Activated B cell treated with CpG ODN at 0.5 μM for 24 hours (primary cell): ENCODE measurements at regions of chr15 and their contacts with region 1.

Region 1: DNA sequence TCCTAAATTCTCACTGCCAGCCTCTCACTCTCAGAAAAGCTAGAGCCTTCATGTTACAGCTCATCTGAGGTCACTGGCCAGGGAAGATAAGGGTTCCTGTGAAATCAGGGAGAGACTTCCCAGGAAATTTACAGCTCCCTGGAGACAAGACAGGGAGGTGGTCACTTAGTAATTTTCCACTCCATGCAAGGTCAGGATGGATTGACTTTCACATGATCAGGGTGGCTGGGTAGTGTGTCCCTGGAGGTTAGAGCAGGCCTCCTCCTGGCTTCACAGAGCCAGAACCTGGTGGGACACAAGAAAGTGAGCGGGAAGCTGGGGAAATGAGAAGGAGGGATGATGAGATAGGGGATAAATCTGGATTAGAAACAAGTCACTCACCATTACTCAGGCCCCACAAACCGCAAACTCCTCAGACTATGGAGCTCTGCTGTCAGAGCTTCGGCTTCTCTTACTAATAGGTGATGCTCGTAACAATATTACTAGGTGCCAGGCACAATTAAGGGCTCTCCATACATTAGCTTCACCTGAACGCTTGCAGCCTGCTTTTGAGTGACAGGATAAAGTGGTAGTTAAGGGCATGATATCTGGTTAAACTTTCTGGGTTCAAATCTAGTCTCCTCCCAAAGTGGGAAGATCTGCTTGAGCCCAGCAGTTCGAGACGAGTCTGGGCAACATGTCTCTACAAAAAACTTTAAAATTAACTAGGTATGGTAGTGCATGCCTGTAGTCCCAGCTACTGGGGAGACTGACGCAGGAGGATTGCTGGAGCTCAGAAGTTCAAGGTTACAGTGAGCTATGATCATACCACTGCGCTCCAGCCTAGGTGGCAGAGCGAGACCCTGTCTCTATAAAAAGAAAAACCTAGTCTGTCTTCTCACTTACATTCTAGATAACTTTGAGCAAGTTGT is 24.9 kb downstream of the DUOX2 start:
- DNase-seq: no peak
- ATAC-seq: no peak
- H3K4me3 Mint-ChIP-seq: no peak overlapping the region
- H3K27ac Mint-ChIP-seq: no peak overlapping the region
- H3K4me1 Mint-ChIP-seq: no peaks in the 10 kb centered on the region
- H3K27me3 Mint-ChIP-seq: peaks cover 30% of the 10 kb centered on the region
- CTCF ChIP-seq: no peak

Region 2: GRCh38 chr15:45331972-45332371 is 242.9 kb after region 1 on chr15:
- CTCF ChIA-PET with region 1: no interaction called
- POLR2A ChIA-PET with region 1: interaction called, 11 read pairs
- intact Hi-C with region 1: no loop called
- DNase-seq: no peak
- ATAC-seq: no peak
- H3K4me3 Mint-ChIP-seq: no peak overlapping the region
- H3K27ac Mint-ChIP-seq: no peak overlapping the region
- H3K4me1 Mint-ChIP-seq: no peaks in the 10 kb centered on the region
- H3K27me3 Mint-ChIP-seq: peaks cover 16% of the 10 kb centered on the region
- CTCF ChIP-seq: no peak